Ascending aorta (tissue), 2 donors: ENCODE measurements at regions of chr12 and their contacts with region 1.

Region 1: DNA sequence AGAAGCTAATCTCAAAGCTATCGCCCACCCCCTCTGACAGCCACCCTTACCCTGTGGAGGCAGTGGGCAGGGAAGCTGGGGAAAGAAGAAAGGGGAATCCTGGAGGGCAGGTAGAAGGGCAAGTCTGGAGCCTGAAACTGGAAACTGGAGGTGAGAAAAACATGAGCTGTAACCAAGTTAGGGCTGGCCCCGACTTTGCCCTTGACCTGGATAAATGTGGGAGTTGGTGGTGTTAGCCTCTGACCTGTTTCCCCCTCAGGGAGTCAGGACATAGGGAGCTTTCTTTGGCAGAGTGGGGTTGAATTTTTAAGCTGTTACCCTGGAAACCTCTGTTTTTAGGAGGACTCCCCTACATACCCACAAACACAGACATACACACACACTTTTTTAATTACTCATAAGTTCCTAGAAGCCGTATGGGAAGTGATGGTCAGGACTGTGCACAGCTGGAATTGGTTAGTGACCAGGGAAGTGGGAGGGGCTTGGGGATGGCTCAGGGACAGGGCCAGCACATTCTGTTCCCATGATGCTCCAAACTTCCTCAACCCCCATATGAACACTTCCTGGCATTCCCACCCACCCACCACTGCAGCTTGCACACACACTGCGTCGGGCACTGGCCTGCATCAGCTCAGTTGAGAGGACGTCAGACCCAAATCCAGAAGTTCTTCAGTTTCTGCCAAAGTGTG is 5.0 kb upstream of the MMP19 start:
- DNase-seq: peak; percentile 93 to 99
- H3K4me3 ChIP-seq: peak overlapping the region in 1 of 2 donors; percentile 26
- H3K27ac ChIP-seq: peak overlapping the region; percentile 99
- H3K4me1 ChIP-seq: peaks cover 4 to 51% of the 10 kb centered on the region in 2 donors
- H3K27me3 ChIP-seq: no peaks in the 10 kb centered on the region
- CTCF ChIP-seq: no peak

Region 2: DNA sequence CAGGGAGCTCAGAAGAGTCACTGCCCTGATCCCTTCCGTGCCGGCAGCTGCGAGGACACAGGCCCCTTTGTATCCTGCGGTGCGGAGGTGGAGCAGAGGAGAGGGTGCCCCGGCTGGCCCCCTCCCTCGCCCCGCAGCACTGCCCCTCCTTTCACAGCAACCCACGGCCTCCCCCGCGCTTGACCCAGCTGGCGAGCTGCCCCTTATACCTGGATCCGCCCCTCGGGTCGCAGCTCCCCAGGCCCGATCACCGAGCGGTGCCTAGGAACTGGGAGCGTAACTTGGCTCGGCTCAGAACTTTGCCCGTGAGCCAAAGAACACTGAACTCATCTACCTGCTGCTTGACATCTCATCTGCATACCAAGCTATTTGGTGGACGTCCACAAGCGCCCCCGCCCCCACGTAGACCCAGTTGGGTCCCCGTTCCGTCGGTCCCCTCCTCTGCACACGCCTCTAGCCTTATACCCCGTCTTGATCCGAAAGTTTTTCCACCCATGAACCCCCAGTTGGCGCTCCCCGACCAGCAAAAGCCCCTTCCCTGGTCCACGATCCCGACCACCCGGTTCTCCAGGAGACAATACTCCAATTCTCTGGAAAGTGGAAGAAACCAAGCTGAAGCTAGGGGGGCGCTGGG is 17.7 kb before region 1 on chr12:
- intact Hi-C with region 1: loop called (anchors 1 kb)
- DNase-seq: peak in 1 of 2 donors; percentile 81
- H3K4me3 ChIP-seq: peak overlapping the region; percentile 75 to 99
- H3K27ac ChIP-seq: peak overlapping the region; percentile 92 to 99
- H3K4me1 ChIP-seq: peaks cover 8 to 32% of the 10 kb centered on the region in 2 donors
- H3K27me3 ChIP-seq: no peaks in the 10 kb centered on the region
- CTCF ChIP-seq: no peak

Region 3: GRCh38 chr12:55865327-55865726 is 17.6 kb after region 1 on chr12:
- intact Hi-C with region 1: no loop called
- DNase-seq: peak in 1 of 2 donors; percentile 4
- H3K4me3 ChIP-seq: no peak overlapping the region
- H3K27ac ChIP-seq: no peak overlapping the region
- H3K4me1 ChIP-seq: peaks cover 0 to 2% of the 10 kb centered on the region in 2 donors
- H3K27me3 ChIP-seq: no peaks in the 10 kb centered on the region
- CTCF ChIP-seq: no peak

Region 4: GRCh38 chr12:56521590-56522371 is 674.0 kb after region 1 on chr12 and contains the start of gene RBMS2:
- intact Hi-C with region 1: loop called (anchors 10 kb)
- DNase-seq: peak; percentile 77 to 93
- H3K4me3 ChIP-seq: peak within 1 kb of the TSS; percentile 64 to 71
- H3K27ac ChIP-seq: peak within 1 kb of the TSS; percentile 78 to 88
- H3K4me1 ChIP-seq: peaks cover 0 to 35% of the 10 kb centered on the region in 2 donors
- H3K27me3 ChIP-seq: no peaks in the 10 kb centered on the region
- CTCF ChIP-seq: no peak
- total RNA-seq, gene RBMS2: 21.3 TPM